HCT116 (cell line): ENCODE measurements at regions of chr6 and their contacts with region 1.

Region 1: GRCh38 chr6:44096612-44097011 is 30.6 kb downstream of the MRPL14 start:
- DNase-seq: peak; percentile 60
- ATAC-seq: peak; percentile 91
- H3K4me3 ChIP-seq: no peak overlapping the region
- H3K27ac ChIP-seq: no peak overlapping the region
- H3K4me1 ChIP-seq: no peaks in the 10 kb centered on the region; a peak in 1 of 4 replicates
- H3K27me3 ChIP-seq: no peaks in the 10 kb centered on the region
- CTCF ChIP-seq: peak; percentile 82 to 83 (median 83)
- POLR2A ChIP-seq: no peak
- RAD21 ChIP-seq: peak; percentile 89

Region 2: GRCh38 chr6:44151348-44152108 is 54.9 kb after region 1 on chr6:
- CTCF ChIA-PET with region 1: interaction called, 10 read pairs
- POLR2A ChIA-PET with region 1: no interaction called
- RAD21 ChIA-PET with region 1: interaction called in 1 of 2 experiments, 5 read pairs
- intact Hi-C with region 1: loop called (anchors 1 kb)
- DNase-seq: peak; percentile 41
- ATAC-seq: peak; percentile 95
- H3K4me3 ChIP-seq: no peak overlapping the region
- H3K27ac ChIP-seq: no peak overlapping the region
- H3K4me1 ChIP-seq: peaks cover 0 to 6% of the 10 kb centered on the region in 2 experiments; a peak in 1 of 4 replicates
- H3K27me3 ChIP-seq: no peaks in the 10 kb centered on the region
- CTCF ChIP-seq: peak; percentile 97 to 100 (median 99)
- POLR2A ChIP-seq: no peak
- RAD21 ChIP-seq: peak; percentile 81

Region 3: GRCh38 chr6:44237813-44238433 is 141.3 kb after region 1 on chr6:
- CTCF ChIA-PET with region 1: interaction called, 13 read pairs
- POLR2A ChIA-PET with region 1: no interaction called
- RAD21 ChIA-PET with region 1: no interaction called
- intact Hi-C with region 1: loop called (anchors 1 kb)
- DNase-seq: no peak
- ATAC-seq: peak; percentile 83
- H3K4me3 ChIP-seq: peak overlapping the region; percentile 45 to 56
- H3K27ac ChIP-seq: peak overlapping the region; percentile 82
- H3K4me1 ChIP-seq: peaks cover 29 to 42% of the 10 kb centered on the region in 2 experiments
- H3K27me3 ChIP-seq: no peaks in the 10 kb centered on the region
- CTCF ChIP-seq: peak in 2 of 3 experiments; percentile 90 to 96; a peak in 4 of 6 replicates
- POLR2A ChIP-seq: no peak
- RAD21 ChIP-seq: no peak

Region 4: DNA sequence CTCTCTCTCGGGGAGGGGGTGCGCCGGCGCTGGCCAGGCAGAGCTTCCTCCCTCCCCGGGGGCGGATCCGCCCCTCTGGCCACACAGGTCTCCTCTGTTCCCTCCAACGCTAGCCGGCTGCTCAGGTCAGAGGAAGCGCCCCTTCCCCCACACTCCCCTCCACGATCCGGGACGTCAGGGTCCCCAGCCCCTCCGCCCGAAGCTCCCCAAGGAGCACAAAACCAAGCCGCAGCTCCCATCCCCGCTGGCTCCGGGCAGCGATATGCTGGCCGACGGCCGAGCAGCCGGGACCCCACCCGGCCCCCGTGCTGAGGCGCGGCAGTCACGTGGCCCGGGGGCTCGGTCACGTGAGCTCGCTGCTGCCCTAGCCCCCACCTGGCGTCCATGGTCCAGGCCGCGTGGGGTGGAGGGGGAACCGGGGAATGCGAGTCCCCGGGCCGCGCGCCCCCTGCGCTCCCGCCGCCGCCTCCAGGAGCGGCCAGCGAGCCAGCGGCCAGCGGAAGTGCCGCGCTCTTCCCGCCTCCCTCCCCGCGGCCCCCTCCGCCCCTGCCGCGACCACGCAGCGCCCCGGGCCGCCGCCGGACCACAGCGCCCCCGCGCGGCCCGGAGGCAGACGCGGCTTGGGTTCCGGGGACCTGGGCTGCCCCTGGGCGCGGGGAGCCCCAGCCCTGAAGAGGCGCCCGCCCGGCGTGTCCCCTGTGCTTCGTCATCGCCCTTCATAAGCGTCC is 160.6 kb after region 1 on chr6 and contains the start of gene SLC35B2:
- CTCF ChIA-PET with region 1: interaction called, 6 read pairs
- POLR2A ChIA-PET with region 1: no interaction called
- RAD21 ChIA-PET with region 1: no interaction called
- intact Hi-C with region 1: loop called (anchors 5 kb)
- DNase-seq: no peak
- ATAC-seq: peak; percentile 67
- H3K4me3 ChIP-seq: peak within 1 kb of the TSS; percentile 59 to 92
- H3K27ac ChIP-seq: peak within 1 kb of the TSS; percentile 95
- H3K4me1 ChIP-seq: peaks cover 2 to 21% of the 10 kb centered on the region in 2 experiments; a peak in 3 of 4 replicates
- H3K27me3 ChIP-seq: no peaks in the 10 kb centered on the region
- CTCF ChIP-seq: peak; percentile 19 to 60 (median 44); a peak in 4 of 6 replicates
- POLR2A ChIP-seq: peak; percentile 47
- RAD21 ChIP-seq: no peak
- total RNA-seq, gene SLC35B2: 50.5 TPM

Region 5: DNA sequence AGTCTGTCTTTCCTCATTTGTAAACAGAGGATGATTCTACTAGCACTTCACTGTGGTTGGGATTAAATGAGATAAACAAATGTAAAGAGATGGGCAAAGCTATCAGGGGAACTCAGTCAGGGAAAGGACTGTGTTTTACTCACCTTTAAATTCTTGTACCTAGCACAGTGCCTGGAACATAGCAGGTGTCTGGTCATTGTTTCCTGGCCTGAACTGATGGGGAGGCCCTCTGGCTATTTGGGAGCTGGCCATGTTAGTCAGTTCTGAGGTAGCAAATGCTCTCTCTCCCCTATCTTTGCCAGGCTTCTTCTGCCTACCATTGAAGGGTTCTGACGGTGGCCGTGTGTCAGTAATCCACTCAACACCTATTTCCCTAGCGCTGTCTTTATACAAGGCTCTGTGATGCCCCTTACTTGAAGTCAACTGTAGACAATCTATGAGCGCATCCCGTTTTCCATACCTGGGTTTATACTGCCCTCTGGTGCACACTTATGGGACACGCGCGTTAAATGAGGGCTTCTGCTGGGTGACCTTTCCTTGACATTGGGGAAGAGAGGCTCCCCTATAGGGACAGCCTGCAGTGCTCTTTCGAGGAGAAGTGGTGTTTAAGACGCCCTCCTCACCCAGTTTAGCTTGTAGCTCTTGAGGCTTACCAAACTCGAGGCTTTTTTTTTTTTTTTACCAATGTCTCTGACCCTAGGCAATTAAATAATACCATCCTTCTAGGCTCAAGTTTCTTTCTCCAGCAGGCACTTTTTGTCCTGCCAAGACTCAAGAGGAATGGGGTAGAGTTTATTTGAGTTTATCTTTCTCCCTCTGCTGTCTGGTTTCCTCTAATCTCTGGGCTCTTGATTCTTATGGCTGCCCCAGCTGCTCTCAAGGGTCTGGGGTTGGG is 241.9 kb after region 1 on chr6:
- CTCF ChIA-PET with region 1: interaction called, 5 read pairs
- POLR2A ChIA-PET with region 1: no interaction called
- RAD21 ChIA-PET with region 1: no interaction called
- intact Hi-C with region 1: loop called (anchors 1 kb)
- DNase-seq: peak; percentile 54
- ATAC-seq: peak; percentile 97
- H3K4me3 ChIP-seq: no peak overlapping the region
- H3K27ac ChIP-seq: no peak overlapping the region
- H3K4me1 ChIP-seq: no peaks in the 10 kb centered on the region
- H3K27me3 ChIP-seq: no peaks in the 10 kb centered on the region
- CTCF ChIP-seq: peak; percentile 68 to 91 (median 87)
- POLR2A ChIP-seq: no peak
- RAD21 ChIP-seq: peak; percentile 95

Region 6: DNA sequence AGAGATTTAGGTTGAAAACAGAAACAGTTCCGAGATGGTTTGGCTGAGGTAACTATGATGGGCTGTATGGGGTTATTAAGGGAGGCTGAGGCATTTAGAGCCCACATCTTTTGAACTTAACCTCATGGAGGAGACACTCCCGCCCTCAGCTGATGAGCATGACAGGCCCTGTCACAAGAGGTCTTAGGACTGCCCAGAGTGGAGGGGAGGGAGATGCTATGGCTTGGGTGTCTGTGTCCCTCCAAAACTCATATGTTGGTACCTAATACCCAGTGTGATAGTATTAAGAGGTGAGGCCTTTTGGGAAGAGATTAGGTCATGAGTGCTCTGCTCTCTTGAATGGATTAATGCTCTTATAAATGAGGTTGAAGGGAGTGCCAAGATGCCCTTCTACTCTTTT is 417.5 kb after region 1 on chr6:
- CTCF ChIA-PET with region 1: no interaction called
- POLR2A ChIA-PET with region 1: no interaction called
- RAD21 ChIA-PET with region 1: no interaction called
- intact Hi-C with region 1: no loop called
- DNase-seq: no peak
- ATAC-seq: no peak
- H3K4me3 ChIP-seq: no peak overlapping the region
- H3K27ac ChIP-seq: no peak overlapping the region
- H3K4me1 ChIP-seq: no peaks in the 10 kb centered on the region
- H3K27me3 ChIP-seq: no peaks in the 10 kb centered on the region
- CTCF ChIP-seq: no peak
- POLR2A ChIP-seq: no peak
- RAD21 ChIP-seq: no peak

Region 7: GRCh38 chr6:44524476-44525227 is 428.0 kb after region 1 on chr6:
- CTCF ChIA-PET with region 1: no interaction called
- POLR2A ChIA-PET with region 1: no interaction called
- RAD21 ChIA-PET with region 1: no interaction called
- intact Hi-C with region 1: no loop called
- DNase-seq: no peak
- ATAC-seq: no peak
- H3K4me3 ChIP-seq: no peak overlapping the region
- H3K27ac ChIP-seq: no peak overlapping the region
- H3K4me1 ChIP-seq: no peaks in the 10 kb centered on the region
- H3K27me3 ChIP-seq: no peaks in the 10 kb centered on the region
- CTCF ChIP-seq: no peak
- POLR2A ChIP-seq: no peak
- RAD21 ChIP-seq: no peak